ENCODE measurements at regions of chr1 and their contacts with region 1.

Region 1: DNA sequence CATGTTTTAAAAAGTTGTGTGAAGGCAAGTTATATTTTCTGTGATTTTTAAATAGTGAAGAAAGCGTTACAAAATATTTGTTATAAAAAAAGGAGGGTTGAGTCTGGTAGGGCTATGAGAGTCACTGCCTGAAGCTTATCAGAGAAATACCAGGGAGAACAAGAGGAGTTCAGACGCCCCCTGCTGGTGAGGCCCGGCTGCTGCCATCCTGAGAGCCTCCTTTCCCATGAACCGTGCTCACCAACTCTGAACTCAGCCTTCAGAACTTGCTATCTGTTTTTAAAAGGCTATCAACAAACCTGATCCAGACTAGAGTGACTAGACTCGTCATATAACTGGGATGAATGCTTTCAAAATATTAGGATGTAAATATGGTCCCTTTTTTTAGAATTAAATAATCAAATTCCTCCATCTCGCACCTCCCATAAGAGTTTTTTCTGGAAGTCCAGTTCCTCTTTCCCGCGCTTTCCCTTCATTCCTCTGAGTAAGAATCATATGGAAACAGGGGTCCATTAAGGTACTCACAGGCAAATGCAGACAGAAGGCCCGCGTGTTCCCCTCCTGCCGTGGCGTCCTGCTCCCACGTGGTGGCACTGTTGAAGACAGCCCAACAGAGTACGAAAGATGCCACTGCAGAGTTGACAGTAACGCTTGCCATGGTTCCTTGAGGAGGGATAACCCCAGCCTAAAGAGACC is 26.2 kb upstream of the SPATA6 start:
- DNase-seq: peak; percentile 68
- ATAC-seq: peak; percentile 62
- H3K4me3 ChIP-seq: no peak overlapping the region
- H3K4me3 Mint-ChIP-seq: no peak overlapping the region
- H3K27ac ChIP-seq: no peak overlapping the region
- H3K27ac Mint-ChIP-seq: no peak overlapping the region
- H3K4me1 ChIP-seq: peaks cover 0 to 5% of the 10 kb centered on the region in 2 donors
- H3K4me1 Mint-ChIP-seq: peaks cover 4% of the 10 kb centered on the region
- H3K27me3 ChIP-seq: no peaks in the 10 kb centered on the region
- H3K27me3 Mint-ChIP-seq: peaks cover 12% of the 10 kb centered on the region
- CTCF ChIP-seq: peak; percentile 93

Region 2: DNA sequence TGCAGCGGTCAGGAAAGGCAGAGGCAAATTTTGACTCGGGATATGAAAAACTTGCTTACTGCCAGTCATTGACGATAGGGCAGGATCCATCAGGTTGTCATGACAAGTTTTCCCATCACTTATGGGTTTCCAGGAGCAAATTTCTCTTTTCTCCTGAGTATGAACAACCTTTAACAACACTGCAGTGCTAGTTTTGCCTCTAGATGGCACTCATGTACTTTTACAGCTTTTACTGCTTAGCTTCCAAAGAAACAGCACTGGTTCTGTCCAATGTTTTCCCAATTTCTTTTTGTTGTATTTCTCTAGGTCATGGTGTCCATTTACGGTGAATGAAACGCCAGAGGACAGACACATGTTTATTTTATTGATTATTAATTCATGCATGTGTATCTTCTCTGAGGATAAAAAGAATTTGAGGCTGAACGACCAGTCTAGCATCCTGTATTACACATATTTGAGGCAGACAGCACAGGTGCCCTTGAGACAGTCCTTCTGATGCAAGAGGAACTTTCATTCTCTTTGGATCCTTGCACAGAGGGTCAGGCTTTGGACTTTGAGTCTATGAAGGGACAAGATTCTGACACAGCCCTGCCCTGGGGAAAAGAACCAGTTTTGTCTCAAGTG is 388.7 kb before region 1 on chr1:
- CTCF ChIA-PET with region 1: interaction called, 41 read pairs
- POLR2A ChIA-PET with region 1: no interaction called
- intact Hi-C with region 1: no loop called
- DNase-seq: peak; percentile 30
- ATAC-seq: no peak
- H3K4me3 ChIP-seq: no peak overlapping the region
- H3K4me3 Mint-ChIP-seq: no peak overlapping the region
- H3K27ac ChIP-seq: no peak overlapping the region
- H3K27ac Mint-ChIP-seq: no peak overlapping the region
- H3K4me1 ChIP-seq: no peaks in the 10 kb centered on the region
- H3K4me1 Mint-ChIP-seq: no peaks in the 10 kb centered on the region
- H3K27me3 ChIP-seq: peaks cover 0 to 5% (median under 1%) of the 10 kb centered on the region in 4 experiments
- H3K27me3 Mint-ChIP-seq: peaks cover 9% of the 10 kb centered on the region
- CTCF ChIP-seq: peak; percentile 73

Region 3: DNA sequence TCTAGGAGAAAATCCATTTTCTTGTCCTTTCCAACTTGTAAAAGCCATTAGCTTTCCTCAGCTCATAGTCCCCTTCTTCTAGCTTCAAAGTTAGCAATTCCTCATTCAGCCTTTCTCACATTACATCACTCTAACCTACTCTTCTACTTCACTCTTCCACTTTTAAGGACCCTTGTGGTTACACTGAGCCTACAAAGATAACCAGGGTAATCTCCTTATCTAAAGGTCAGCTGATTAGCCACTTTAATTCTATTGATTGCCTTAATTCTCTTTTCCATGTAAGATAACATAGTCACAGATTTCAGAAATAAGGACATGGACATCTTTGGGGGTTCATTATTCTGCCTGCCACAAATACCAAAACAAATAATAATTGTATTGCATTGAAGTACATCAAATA is 17.7 kb before region 1 on chr1:
- CTCF ChIA-PET with region 1: interaction called, 15 read pairs
- POLR2A ChIA-PET with region 1: no interaction called
- intact Hi-C with region 1: no loop called
- DNase-seq: no peak
- ATAC-seq: no peak
- H3K4me3 ChIP-seq: no peak overlapping the region
- H3K4me3 Mint-ChIP-seq: no peak overlapping the region
- H3K27ac ChIP-seq: no peak overlapping the region
- H3K27ac Mint-ChIP-seq: no peak overlapping the region
- H3K4me1 ChIP-seq: no peaks in the 10 kb centered on the region
- H3K4me1 Mint-ChIP-seq: no peaks in the 10 kb centered on the region
- H3K27me3 ChIP-seq: peaks cover 0 to 6% (median 3%) of the 10 kb centered on the region in 4 experiments
- H3K27me3 Mint-ChIP-seq: peaks cover 12% of the 10 kb centered on the region
- CTCF ChIP-seq: no peak